Activated CD4-positive, alpha-beta T cell treated with anti-CD3 and anti-CD28 coated beads, Interleukin-2, amount 10 ng/mL, durations not matched to agents 24 days and 14 days (primary cell): ENCODE measurements at regions of chr6 and their contacts with region 1.

Region 1: GRCh38 chr6:125910527-125910926 is 46.0 kb upstream of the HINT3 start:
- DNase-seq: peak; percentile 67
- H3K4me3 Mint-ChIP-seq: peak overlapping the region; percentile 17
- H3K27ac Mint-ChIP-seq: peak overlapping the region; percentile 78
- H3K4me1 Mint-ChIP-seq: peaks cover 27% of the 10 kb centered on the region
- H3K27me3 Mint-ChIP-seq: no peaks in the 10 kb centered on the region

Region 2: DNA sequence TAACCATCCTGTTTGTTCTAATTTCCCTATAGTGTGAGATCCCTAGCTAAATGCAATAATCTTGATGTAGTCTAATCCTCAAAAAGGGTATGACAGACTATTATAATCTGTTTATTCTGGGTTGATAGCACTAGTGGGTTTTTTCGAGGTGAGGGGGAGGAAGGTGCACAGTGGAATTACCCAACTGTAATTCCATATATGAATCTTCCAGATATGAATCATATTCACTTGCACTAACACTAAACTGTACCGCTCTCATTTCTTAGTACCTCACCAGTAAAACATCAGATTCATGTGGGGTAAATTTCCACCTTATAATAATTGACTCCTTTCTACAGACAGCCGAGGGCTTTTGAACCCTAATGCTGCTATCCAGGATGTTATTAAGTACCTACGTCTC is 103.2 kb before region 1 on chr6:
- intact Hi-C with region 1: loop called (anchors 1 kb)
- DNase-seq: peak; percentile 50
- H3K4me3 Mint-ChIP-seq: peak overlapping the region; percentile 46
- H3K27ac Mint-ChIP-seq: peak overlapping the region; percentile 79
- H3K4me1 Mint-ChIP-seq: peaks cover 63% of the 10 kb centered on the region
- H3K27me3 Mint-ChIP-seq: no peaks in the 10 kb centered on the region

Region 3: DNA sequence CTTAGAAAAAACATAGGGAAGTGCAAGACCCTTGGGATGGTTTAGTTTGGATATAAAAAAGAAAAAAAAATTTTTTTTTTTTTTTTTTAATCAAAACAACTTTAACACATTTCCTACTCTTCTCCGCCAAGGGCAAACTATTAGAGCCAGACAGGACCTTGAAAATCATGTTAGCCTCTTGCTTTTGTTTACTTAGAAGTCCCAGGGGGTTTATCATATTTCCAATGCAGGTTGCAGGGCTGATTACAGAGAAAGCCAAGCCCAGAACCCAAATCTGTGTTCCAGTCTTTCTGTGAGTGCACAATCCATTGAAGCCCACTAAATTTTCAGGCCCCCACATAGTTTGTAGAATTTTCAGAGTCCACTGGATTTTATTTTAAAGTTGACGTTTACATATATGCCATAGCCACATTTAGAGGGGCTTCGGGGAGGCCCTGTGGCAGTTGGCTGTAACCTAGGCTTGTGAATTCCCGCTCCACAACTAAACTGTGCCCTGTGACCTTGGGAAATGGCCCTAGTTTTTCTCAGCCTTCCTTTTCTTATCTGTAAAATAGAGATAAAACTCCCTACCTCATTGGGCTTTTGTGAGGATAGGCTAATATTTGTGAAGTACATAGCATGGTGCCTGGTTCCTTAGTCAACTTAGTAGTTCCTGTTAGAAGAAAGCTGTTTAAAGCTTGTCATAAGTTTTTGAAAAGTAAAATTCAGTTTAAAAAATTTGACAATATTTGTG is 64.1 kb before region 1 on chr6:
- intact Hi-C with region 1: no loop called
- DNase-seq: no peak
- H3K4me3 Mint-ChIP-seq: no peak overlapping the region
- H3K27ac Mint-ChIP-seq: no peak overlapping the region
- H3K4me1 Mint-ChIP-seq: no peaks in the 10 kb centered on the region
- H3K27me3 Mint-ChIP-seq: no peaks in the 10 kb centered on the region

Region 4: GRCh38 chr6:126127659-126128058 is 217.1 kb after region 1 on chr6:
- intact Hi-C with region 1: no loop called
- DNase-seq: no peak
- H3K4me3 Mint-ChIP-seq: no peak overlapping the region
- H3K27ac Mint-ChIP-seq: no peak overlapping the region
- H3K4me1 Mint-ChIP-seq: no peaks in the 10 kb centered on the region
- H3K27me3 Mint-ChIP-seq: peaks cover 2% of the 10 kb centered on the region